ENCODE measurements at regions of chr10 and their contacts with region 1.

Region 1: GRCh38 chr10:32256613-32257437 is 90.1 kb downstream of the EPC1 start:
- DNase-seq: peak; percentile 79
- H3K4me3 ChIP-seq: no peak overlapping the region
- H3K27ac ChIP-seq: no peak overlapping the region
- H3K4me1 ChIP-seq: no peaks in the 10 kb centered on the region
- H3K27me3 ChIP-seq: no peaks in the 10 kb centered on the region
- CTCF ChIP-seq: peak; percentile 87
- POLR2A ChIP-seq: no peak

Region 2: DNA sequence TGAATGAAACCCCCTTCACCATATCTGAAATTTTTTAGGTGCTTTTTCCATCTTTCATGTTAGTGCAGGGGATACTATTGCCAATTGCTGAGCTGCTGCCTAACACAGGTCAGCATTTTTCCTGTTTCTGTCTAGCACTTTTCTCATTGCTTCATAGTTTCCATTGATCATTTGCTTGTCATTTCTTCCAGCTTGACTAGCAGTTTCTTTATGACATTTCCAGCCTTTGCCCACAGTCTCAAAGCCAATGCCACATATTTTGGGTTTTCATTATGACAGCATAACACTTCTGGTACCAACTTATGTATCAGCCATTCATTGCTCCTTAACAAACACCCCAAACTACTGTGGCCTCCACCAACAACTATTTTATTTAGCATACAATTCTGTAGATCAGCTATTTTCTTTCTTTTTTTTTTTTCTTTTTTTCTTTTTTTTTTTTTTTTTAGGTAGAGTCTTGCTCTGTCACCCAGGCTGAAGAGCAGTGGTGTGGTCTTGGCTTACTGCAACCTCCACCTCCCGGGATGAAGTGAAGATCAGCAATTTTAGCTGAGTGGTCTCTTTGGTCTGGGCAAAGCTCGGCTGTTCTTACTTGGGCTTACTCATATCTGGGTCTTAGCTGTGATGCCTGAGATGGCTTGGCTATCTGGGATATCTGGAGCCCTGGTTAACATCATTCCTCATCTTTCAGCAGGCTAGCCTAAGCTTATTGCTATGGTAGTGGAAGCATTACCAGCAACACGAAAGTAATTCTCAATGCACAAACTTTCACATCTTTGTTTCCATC is 12.2 kb before region 1 on chr10:
- CTCF ChIA-PET with region 1: interaction called, 20 read pairs
- POLR2A ChIA-PET with region 1: no interaction called
- dilution Hi-C with region 1: no loop called
- intact Hi-C with region 1: no loop called
- DNase-seq: no peak
- H3K4me3 ChIP-seq: no peak overlapping the region
- H3K27ac ChIP-seq: no peak overlapping the region
- H3K4me1 ChIP-seq: no peaks in the 10 kb centered on the region
- H3K27me3 ChIP-seq: peaks cover 0 to 6% of the 10 kb centered on the region in 2 experiments
- CTCF ChIP-seq: no peak
- POLR2A ChIP-seq: no peak

Region 3: DNA sequence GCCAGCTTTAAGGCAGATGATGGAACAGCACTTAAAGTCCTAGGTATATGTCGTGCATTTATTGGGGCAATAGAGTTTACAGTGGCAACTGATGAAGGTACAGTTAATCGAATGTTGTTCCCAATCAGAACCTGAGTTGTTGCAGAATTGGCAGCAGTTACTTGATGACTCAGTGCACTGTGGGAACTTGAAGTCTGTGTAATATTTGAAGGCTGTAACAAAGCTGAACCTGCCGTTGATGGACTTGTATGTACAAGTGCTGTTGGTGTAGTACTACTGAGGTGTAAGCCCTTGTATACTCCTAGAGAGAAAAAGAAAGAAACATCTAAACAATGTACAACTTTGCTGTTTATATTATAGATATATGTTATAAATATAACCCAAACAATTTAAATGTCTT is 14.8 kb after region 1 on chr10:
- CTCF ChIA-PET with region 1: interaction called, 10 read pairs
- POLR2A ChIA-PET with region 1: no interaction called
- dilution Hi-C with region 1: no loop called
- intact Hi-C with region 1: no loop called
- DNase-seq: no peak
- H3K4me3 ChIP-seq: no peak overlapping the region
- H3K27ac ChIP-seq: no peak overlapping the region
- H3K4me1 ChIP-seq: no peaks in the 10 kb centered on the region
- H3K27me3 ChIP-seq: no peaks in the 10 kb centered on the region
- CTCF ChIP-seq: no peak
- POLR2A ChIP-seq: no peak

Region 4: GRCh38 chr10:32367793-32368453 is 111.1 kb after region 1 on chr10:
- CTCF ChIA-PET with region 1: interaction called, 56 read pairs
- POLR2A ChIA-PET with region 1: interaction called, 4 read pairs
- dilution Hi-C with region 1: no loop called
- intact Hi-C with region 1: loop called (anchors 1 kb)
- DNase-seq: peak; percentile 83
- H3K4me3 ChIP-seq: no peak overlapping the region
- H3K27ac ChIP-seq: no peak overlapping the region
- H3K4me1 ChIP-seq: peaks cover 2% of the 10 kb centered on the region
- H3K27me3 ChIP-seq: no peaks in the 10 kb centered on the region
- CTCF ChIP-seq: peak; percentile 70 to 72
- POLR2A ChIP-seq: no peak

Measured in endothelial cell of umbilical vein (primary cell).